ENCODE measurements at regions of chr18 and their contacts with region 1.

Region 1: DNA sequence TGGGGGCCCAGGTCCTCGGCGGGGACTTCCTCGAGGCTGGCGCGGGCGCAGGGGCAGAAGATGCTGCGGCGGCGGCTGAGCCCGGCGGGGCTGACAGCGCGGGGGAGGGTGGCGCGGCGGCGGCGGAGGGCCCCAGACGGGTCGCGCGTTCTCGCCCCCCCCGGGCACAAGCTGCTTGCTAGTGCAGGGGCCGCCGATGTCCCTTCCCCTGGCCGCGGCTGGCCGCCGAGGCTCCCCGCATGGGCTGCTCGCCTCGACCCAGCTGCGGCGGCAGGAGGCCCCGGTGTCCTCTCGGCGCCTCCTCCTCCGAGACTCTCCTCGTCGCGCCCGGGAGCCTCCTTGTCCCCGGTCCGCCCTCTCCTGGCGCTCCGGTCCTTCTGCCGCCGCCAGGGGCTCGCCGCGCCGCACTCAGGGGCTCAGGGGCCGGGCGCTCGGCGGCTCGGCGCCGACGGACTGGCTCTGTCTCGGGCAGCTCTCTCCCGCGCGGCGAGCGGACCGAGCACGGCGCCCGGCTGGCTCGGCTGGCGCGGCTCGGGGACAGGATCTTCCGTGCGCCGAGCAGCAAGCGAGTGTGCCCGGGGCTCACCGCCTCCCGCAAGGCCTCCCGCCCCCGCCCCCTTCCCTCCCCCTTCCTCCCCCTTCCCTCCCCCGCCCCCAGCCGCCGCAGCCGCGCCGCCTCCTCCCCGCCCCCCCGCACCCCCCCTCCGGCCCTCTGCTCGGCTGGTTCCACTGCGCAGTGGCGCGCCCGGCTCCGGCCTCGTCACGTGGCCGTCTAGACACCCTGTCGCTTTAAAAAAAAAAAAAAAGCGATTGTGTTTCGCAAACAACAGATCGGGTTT is 902 bp upstream of the SMAD7 start:
- DNase-seq: peak; percentile 66 to 71
- H3K4me3 ChIP-seq: peak overlapping the region; percentile 55
- H3K4me3 Mint-ChIP-seq: peak overlapping the region; percentile 82
- H3K27ac Mint-ChIP-seq: peak overlapping the region; percentile 76
- H3K4me1 ChIP-seq: peaks cover 9% of the 10 kb centered on the region
- H3K4me1 Mint-ChIP-seq: peaks cover 7% of the 10 kb centered on the region
- H3K27me3 ChIP-seq: no peaks in the 10 kb centered on the region
- H3K27me3 Mint-ChIP-seq: no peaks in the 10 kb centered on the region
- CTCF ChIP-seq: no peak

Region 2: GRCh38 chr18:48781163-48781987 is 170.3 kb before region 1 on chr18:
- CTCF ChIA-PET with region 1: no interaction called
- POLR2A ChIA-PET with region 1: no interaction called
- intact Hi-C with region 1: loop called (anchors 10 kb)
- DNase-seq: peak; percentile 62 to 77
- H3K4me3 ChIP-seq: peak overlapping the region; percentile 15; the same call in 1 of the 2 replicates
- H3K4me3 Mint-ChIP-seq: peak overlapping the region; percentile 70
- H3K27ac Mint-ChIP-seq: peak overlapping the region; percentile 82
- H3K4me1 ChIP-seq: peaks cover 20% of the 10 kb centered on the region
- H3K4me1 Mint-ChIP-seq: no peaks in the 10 kb centered on the region
- H3K27me3 ChIP-seq: no peaks in the 10 kb centered on the region
- H3K27me3 Mint-ChIP-seq: no peaks in the 10 kb centered on the region
- CTCF ChIP-seq: no peak

Region 3: GRCh38 chr18:48889115-48889941 is 62.3 kb before region 1 on chr18:
- CTCF ChIA-PET with region 1: no interaction called
- POLR2A ChIA-PET with region 1: no interaction called
- intact Hi-C with region 1: no loop called
- DNase-seq: no peak
- H3K4me3 ChIP-seq: no peak overlapping the region
- H3K4me3 Mint-ChIP-seq: no peak overlapping the region
- H3K27ac Mint-ChIP-seq: no peak overlapping the region
- H3K4me1 ChIP-seq: 0 out of 2 replicates have a peak, but pooled peaks cover 3% of the 10 kb centered on the region
- H3K4me1 Mint-ChIP-seq: peaks cover 4% of the 10 kb centered on the region
- H3K27me3 ChIP-seq: no peaks in the 10 kb centered on the region
- H3K27me3 Mint-ChIP-seq: no peaks in the 10 kb centered on the region
- CTCF ChIP-seq: no peak

Region 4: GRCh38 chr18:48902023-48902855 is 49.4 kb before region 1 on chr18:
- CTCF ChIA-PET with region 1: no interaction called
- POLR2A ChIA-PET with region 1: no interaction called
- intact Hi-C with region 1: no loop called
- DNase-seq: no peak
- H3K4me3 ChIP-seq: no peak overlapping the region
- H3K4me3 Mint-ChIP-seq: no peak overlapping the region
- H3K27ac Mint-ChIP-seq: no peak overlapping the region
- H3K4me1 ChIP-seq: no peaks in the 10 kb centered on the region
- H3K4me1 Mint-ChIP-seq: no peaks in the 10 kb centered on the region
- H3K27me3 ChIP-seq: no peaks in the 10 kb centered on the region
- H3K27me3 Mint-ChIP-seq: no peaks in the 10 kb centered on the region
- CTCF ChIP-seq: no peak

Region 5: DNA sequence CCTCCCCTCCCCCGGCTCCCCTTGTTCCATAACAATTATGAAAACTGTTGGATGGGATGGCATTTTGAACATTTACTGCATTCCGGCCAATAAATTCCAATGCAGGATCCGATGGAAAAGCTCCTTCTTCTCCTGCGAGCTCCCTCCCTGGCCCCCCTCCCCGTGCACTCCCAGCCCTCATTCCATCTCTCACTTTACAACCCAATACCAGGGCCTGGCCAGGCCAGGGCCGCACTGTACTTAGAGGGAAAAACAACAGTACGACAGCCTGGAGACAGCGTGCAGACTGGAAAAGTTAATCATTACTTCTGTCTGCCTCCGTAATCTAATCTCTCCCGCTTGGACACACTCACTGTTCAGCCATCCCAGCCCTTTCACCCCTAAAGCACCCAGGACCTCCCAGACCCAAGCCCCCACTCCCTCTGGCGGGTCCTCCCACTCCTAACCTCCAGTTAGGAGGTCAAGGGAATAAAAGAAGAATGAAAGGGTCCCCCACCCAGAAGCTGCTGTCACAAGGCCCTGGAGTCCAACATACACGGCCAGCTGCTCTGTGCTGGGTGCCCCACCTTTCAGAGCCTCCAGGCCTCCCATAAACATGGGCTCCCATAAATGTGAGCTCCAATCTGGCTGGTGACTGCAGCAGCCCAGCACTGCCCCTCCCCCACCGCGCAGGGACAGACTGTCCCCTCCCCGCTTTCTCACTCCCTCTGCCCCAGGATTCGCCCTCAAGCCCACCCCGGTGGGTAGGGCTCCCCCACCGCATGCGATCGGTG is 21.5 kb before region 1 on chr18:
- CTCF ChIA-PET with region 1: no interaction called
- POLR2A ChIA-PET with region 1: interaction called, 3 read pairs
- intact Hi-C with region 1: loop called (anchors 1 kb)
- DNase-seq: peak; percentile 78 to 90
- H3K4me3 ChIP-seq: no peak overlapping the region
- H3K4me3 Mint-ChIP-seq: peak overlapping the region; percentile 54
- H3K27ac Mint-ChIP-seq: peak overlapping the region; percentile 94
- H3K4me1 ChIP-seq: peaks cover 41% of the 10 kb centered on the region
- H3K4me1 Mint-ChIP-seq: peaks cover 33% of the 10 kb centered on the region
- H3K27me3 ChIP-seq: no peaks in the 10 kb centered on the region
- H3K27me3 Mint-ChIP-seq: no peaks in the 10 kb centered on the region
- CTCF ChIP-seq: no peak

Region 6: DNA sequence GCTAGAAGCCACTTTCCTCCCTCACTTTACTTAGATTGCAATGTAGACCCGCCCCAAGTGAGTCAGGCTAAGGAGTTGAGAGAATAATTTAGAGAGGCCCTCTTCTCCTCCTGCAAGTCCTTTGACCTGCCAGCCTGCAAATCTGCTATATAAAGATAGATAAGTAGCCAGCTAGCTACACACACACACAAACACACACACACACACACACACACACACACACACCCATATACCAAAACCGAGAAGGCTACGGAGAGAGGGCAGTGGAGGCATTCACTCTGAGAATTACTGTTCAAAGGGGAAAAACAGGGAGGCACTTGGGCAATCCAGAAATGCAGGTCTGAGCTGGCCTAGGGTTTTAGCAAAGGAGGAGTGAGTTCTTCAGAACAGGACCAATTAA is 22.1 kb after region 1 on chr18:
- CTCF ChIA-PET with region 1: no interaction called
- POLR2A ChIA-PET with region 1: no interaction called
- intact Hi-C with region 1: loop called (anchors 2 kb)
- DNase-seq: no peak
- H3K4me3 ChIP-seq: no peak overlapping the region
- H3K4me3 Mint-ChIP-seq: no peak overlapping the region
- H3K27ac Mint-ChIP-seq: no peak overlapping the region
- H3K4me1 ChIP-seq: peaks cover 6% of the 10 kb centered on the region
- H3K4me1 Mint-ChIP-seq: no peaks in the 10 kb centered on the region
- H3K27me3 ChIP-seq: no peaks in the 10 kb centered on the region
- H3K27me3 Mint-ChIP-seq: no peaks in the 10 kb centered on the region
- CTCF ChIP-seq: no peak

Region 7: GRCh38 chr18:48983771-48984355 is 32.2 kb after region 1 on chr18:
- CTCF ChIA-PET with region 1: no interaction called
- POLR2A ChIA-PET with region 1: no interaction called
- intact Hi-C with region 1: no loop called
- DNase-seq: no peak
- H3K4me3 ChIP-seq: no peak overlapping the region
- H3K4me3 Mint-ChIP-seq: no peak overlapping the region
- H3K27ac Mint-ChIP-seq: no peak overlapping the region
- H3K4me1 ChIP-seq: peaks cover 6% of the 10 kb centered on the region; the same call in 1 of the 2 replicates
- H3K4me1 Mint-ChIP-seq: peaks cover 7% of the 10 kb centered on the region
- H3K27me3 ChIP-seq: no peaks in the 10 kb centered on the region
- H3K27me3 Mint-ChIP-seq: no peaks in the 10 kb centered on the region
- CTCF ChIP-seq: no peak

Region 8: GRCh38 chr18:48997985-48998831 is 46.5 kb after region 1 on chr18:
- CTCF ChIA-PET with region 1: no interaction called
- POLR2A ChIA-PET with region 1: interaction called, 10 read pairs
- intact Hi-C with region 1: no loop called
- DNase-seq: peak; percentile 55 to 67
- H3K4me3 ChIP-seq: no peak overlapping the region
- H3K4me3 Mint-ChIP-seq: no peak overlapping the region
- H3K27ac Mint-ChIP-seq: peak overlapping the region; percentile 86
- H3K4me1 ChIP-seq: peaks cover 29% of the 10 kb centered on the region
- H3K4me1 Mint-ChIP-seq: peaks cover 14% of the 10 kb centered on the region
- H3K27me3 ChIP-seq: no peaks in the 10 kb centered on the region
- H3K27me3 Mint-ChIP-seq: no peaks in the 10 kb centered on the region
- CTCF ChIP-seq: no peak

Region 9: DNA sequence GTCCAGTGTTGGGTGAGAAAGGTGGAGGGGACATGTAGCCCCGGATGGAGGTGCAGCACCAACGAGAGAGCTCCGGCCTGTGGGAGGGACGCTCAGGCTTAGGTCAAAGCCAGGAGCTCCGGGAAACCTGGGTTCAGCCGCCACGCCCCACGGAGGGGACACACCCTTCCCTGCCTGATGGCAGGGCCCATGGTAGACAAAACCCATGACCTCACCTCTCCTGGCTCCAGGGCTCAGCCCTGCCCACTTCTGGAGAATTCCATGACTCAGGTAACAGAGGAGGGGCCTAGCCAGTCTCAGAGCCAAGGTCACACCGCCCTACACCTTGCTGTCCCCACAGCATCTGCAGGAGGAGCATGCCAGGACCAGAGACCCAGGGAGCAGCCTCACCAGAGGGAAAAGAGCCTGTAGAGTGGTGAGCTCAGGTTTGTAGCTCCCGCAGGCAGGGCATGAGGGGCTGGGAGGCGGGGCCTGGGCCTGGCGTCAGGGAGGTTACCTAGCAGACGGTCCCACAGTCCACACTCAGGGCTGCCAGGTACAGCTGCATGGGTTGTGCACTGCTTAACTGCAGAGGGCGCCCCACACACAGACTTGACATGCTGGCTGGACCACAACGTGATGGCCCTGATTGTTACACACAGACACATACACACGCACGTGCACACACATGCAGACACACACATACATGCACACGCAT is 69.9 kb after region 1 on chr18:
- CTCF ChIA-PET with region 1: no interaction called
- POLR2A ChIA-PET with region 1: no interaction called
- intact Hi-C with region 1: loop called (anchors 2 kb)
- DNase-seq: peak; percentile 66 to 69
- H3K4me3 ChIP-seq: no peak overlapping the region
- H3K4me3 Mint-ChIP-seq: peak overlapping the region; percentile 53
- H3K27ac Mint-ChIP-seq: peak overlapping the region; percentile 78
- H3K4me1 ChIP-seq: peaks cover 19% of the 10 kb centered on the region; the same call in 1 of the 2 replicates
- H3K4me1 Mint-ChIP-seq: peaks cover 9% of the 10 kb centered on the region
- H3K27me3 ChIP-seq: no peaks in the 10 kb centered on the region
- H3K27me3 Mint-ChIP-seq: no peaks in the 10 kb centered on the region
- CTCF ChIP-seq: peak in 1 of 2 experiments; percentile 38

Region 10: DNA sequence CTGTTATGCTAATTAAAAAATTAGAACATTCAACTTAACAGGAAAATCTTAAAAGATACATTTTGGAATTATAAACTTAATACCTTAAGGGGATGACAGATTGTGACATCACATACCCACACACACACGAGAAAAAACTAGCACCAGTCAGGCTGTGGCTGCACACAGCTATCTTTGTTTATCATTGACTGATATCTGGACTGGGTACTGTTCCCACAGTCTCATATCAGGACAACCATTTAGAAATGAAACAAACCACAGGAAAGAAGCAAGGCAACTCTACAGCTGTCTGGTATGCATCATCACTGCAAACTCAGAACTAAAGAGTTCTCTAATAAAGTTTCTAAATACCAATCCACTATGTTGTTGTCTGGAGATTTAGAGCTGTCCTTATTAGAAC is 210.0 kb after region 1 on chr18:
- CTCF ChIA-PET with region 1: no interaction called
- POLR2A ChIA-PET with region 1: no interaction called
- intact Hi-C with region 1: no loop called
- DNase-seq: no peak
- H3K4me3 ChIP-seq: no peak overlapping the region
- H3K4me3 Mint-ChIP-seq: no peak overlapping the region
- H3K27ac Mint-ChIP-seq: no peak overlapping the region
- H3K4me1 ChIP-seq: no peaks in the 10 kb centered on the region
- H3K4me1 Mint-ChIP-seq: no peaks in the 10 kb centered on the region
- H3K27me3 ChIP-seq: no peaks in the 10 kb centered on the region
- H3K27me3 Mint-ChIP-seq: no peaks in the 10 kb centered on the region
- CTCF ChIP-seq: no peak

Measured in Caco-2 (cell line).